CD4-positive, alpha-beta T cell (primary cell): ENCODE measurements at regions of chr17 and their contacts with region 1.

Region 1: DNA sequence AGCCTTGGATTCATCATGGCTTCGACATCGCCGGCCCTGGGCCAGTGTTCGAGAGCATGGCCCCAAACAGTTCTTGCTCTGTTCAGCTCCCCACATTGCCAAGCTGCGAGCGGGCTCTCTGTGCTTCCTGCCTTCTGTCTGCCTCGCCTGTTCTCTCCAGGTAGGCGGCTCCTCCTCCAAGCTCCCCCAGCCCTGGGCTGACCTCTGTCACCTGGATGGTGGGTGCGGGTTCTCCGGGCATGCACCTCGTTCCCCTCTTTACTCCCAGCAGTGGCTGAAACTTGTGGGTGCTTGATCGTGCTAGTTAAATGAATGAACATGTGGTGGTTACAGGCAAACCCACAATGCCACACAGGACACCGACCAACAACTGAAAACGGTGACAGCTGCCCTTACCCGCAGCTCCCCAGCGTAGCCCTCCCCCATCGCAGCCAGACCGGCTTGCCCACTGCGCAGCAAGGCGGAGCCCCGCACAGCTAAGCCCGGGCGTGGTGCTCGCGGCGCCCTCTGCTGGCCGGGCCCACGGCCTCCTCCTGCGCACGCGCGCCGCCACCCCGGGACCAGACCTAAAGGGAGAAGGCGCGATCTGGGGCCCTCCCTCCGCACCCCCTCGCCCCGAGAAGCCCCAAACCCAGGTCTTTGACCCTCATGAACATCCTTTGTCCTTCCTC is 23.0 kb upstream of the EIF1 start:
- DNase-seq: peak; percentile 75 to 95 (median 88)
- ATAC-seq: peak; percentile 80
- H3K4me3 ChIP-seq: peak overlapping the region; percentile 58
- H3K4me3 Mint-ChIP-seq: peak overlapping the region; percentile 87
- H3K27ac ChIP-seq: peak overlapping the region; percentile 98 to 99
- H3K27ac Mint-ChIP-seq: peak overlapping the region; percentile 90
- H3K4me1 ChIP-seq: peaks cover 42% of the 10 kb centered on the region
- H3K4me1 Mint-ChIP-seq: peaks cover 41% of the 10 kb centered on the region
- H3K27me3 ChIP-seq: no peaks in the 10 kb centered on the region
- H3K27me3 Mint-ChIP-seq: no peaks in the 10 kb centered on the region
- CTCF ChIP-seq: peak; percentile 99

Region 2: GRCh38 chr17:40542558-40543411 is 1122.9 kb before region 1 on chr17:
- CTCF ChIA-PET with region 1: interaction called, 3 read pairs
- POLR2A ChIA-PET with region 1: no interaction called
- intact Hi-C with region 1: loop called in 1 of 2 experiments (anchors 10 kb)
- DNase-seq: peak in 5 of 14 experiments; percentile 32 to 80 (median 45)
- ATAC-seq: no peak
- H3K4me3 ChIP-seq: no peak overlapping the region
- H3K4me3 Mint-ChIP-seq: peak overlapping the region; percentile 72
- H3K27ac ChIP-seq: peak overlapping the region in 1 of 2 donors; percentile 79
- H3K27ac Mint-ChIP-seq: peak overlapping the region; percentile 94
- H3K4me1 ChIP-seq: peaks cover 94% of the 10 kb centered on the region
- H3K4me1 Mint-ChIP-seq: peaks cover 83% of the 10 kb centered on the region
- H3K27me3 ChIP-seq: no peaks in the 10 kb centered on the region
- H3K27me3 Mint-ChIP-seq: no peaks in the 10 kb centered on the region
- CTCF ChIP-seq: no peak

Region 3: GRCh38 chr17:40818733-40819527 is 846.8 kb before region 1 on chr17:
- CTCF ChIA-PET with region 1: interaction called, 7 read pairs
- POLR2A ChIA-PET with region 1: interaction called, 22 read pairs
- intact Hi-C with region 1: no loop called
- DNase-seq: peak; percentile 68 to 96 (median 80)
- ATAC-seq: peak; percentile 83
- H3K4me3 ChIP-seq: peak overlapping the region; percentile 75
- H3K4me3 Mint-ChIP-seq: peak overlapping the region; percentile 96
- H3K27ac ChIP-seq: peak overlapping the region; percentile 62 to 74
- H3K27ac Mint-ChIP-seq: peak overlapping the region; percentile 89
- H3K4me1 ChIP-seq: peaks cover 5% of the 10 kb centered on the region
- H3K4me1 Mint-ChIP-seq: peaks cover 33% of the 10 kb centered on the region
- H3K27me3 ChIP-seq: peaks cover 0 to 1% of the 10 kb centered on the region in 2 experiments
- H3K27me3 Mint-ChIP-seq: peaks cover 15% of the 10 kb centered on the region
- CTCF ChIP-seq: no peak

Region 4: GRCh38 chr17:41121742-41122141 is 544.0 kb before region 1 on chr17:
- CTCF ChIA-PET with region 1: no interaction called
- POLR2A ChIA-PET with region 1: no interaction called
- intact Hi-C with region 1: loop called in 1 of 2 experiments (anchors 5 kb)
- DNase-seq: no peak
- ATAC-seq: no peak
- H3K4me3 ChIP-seq: no peak overlapping the region
- H3K4me3 Mint-ChIP-seq: no peak overlapping the region
- H3K27ac ChIP-seq: no peak overlapping the region
- H3K27ac Mint-ChIP-seq: no peak overlapping the region
- H3K4me1 ChIP-seq: peaks cover 25% of the 10 kb centered on the region
- H3K4me1 Mint-ChIP-seq: peaks cover 71% of the 10 kb centered on the region
- H3K27me3 ChIP-seq: no peaks in the 10 kb centered on the region
- H3K27me3 Mint-ChIP-seq: no peaks in the 10 kb centered on the region
- CTCF ChIP-seq: no peak

Region 5: DNA sequence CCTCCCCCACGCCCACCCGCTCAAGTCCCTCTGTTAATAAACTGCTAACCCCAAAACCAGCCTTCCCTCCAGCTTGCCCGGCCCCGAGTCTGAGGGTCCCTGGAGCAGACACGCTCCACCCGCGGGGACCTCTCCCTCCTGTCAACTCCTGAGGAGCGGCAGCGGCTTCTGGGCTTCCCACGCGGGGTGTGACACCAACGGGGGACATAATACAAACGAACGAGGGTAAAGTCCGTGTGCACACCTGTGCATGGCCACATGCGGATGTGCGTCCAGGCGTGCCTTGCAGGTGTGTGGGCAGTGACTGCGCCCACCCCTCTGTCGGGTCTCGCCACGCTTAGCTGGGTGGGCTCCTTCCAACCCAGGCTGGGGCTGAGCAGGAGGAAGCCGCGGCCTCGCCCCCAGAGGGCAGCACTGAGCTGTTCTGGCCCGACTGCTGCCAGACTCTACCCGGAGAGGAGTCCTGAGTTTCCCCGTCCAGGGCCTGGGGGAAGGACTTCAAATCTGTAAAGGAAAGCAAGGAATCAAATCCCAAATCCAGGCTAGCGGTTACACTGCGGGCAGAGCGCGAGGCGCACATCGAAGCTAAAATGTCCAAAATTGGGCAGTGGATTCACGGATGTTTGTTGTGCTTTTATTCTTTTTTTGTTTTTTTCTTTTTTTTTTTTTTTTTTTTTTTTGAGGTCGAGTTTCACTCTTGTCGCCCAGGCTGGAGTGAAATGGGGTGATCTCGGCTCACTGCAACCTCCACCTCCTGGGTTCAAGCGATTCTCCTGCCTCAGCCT is 17.1 kb before region 1 on chr17:
- CTCF ChIA-PET with region 1: interaction called, 110 read pairs
- POLR2A ChIA-PET with region 1: interaction called, 35 read pairs
- intact Hi-C with region 1: loop called (anchors 1 kb)
- DNase-seq: peak; percentile 70 to 92 (median 82)
- ATAC-seq: peak; percentile 88
- H3K4me3 ChIP-seq: peak overlapping the region; percentile 67
- H3K4me3 Mint-ChIP-seq: peak overlapping the region; percentile 86
- H3K27ac ChIP-seq: no peak overlapping the region
- H3K27ac Mint-ChIP-seq: peak overlapping the region; percentile 50
- H3K4me1 ChIP-seq: peaks cover 15% of the 10 kb centered on the region
- H3K4me1 Mint-ChIP-seq: peaks cover 12% of the 10 kb centered on the region
- H3K27me3 ChIP-seq: no peaks in the 10 kb centered on the region
- H3K27me3 Mint-ChIP-seq: no peaks in the 10 kb centered on the region
- CTCF ChIP-seq: peak; percentile 81

Region 6: DNA sequence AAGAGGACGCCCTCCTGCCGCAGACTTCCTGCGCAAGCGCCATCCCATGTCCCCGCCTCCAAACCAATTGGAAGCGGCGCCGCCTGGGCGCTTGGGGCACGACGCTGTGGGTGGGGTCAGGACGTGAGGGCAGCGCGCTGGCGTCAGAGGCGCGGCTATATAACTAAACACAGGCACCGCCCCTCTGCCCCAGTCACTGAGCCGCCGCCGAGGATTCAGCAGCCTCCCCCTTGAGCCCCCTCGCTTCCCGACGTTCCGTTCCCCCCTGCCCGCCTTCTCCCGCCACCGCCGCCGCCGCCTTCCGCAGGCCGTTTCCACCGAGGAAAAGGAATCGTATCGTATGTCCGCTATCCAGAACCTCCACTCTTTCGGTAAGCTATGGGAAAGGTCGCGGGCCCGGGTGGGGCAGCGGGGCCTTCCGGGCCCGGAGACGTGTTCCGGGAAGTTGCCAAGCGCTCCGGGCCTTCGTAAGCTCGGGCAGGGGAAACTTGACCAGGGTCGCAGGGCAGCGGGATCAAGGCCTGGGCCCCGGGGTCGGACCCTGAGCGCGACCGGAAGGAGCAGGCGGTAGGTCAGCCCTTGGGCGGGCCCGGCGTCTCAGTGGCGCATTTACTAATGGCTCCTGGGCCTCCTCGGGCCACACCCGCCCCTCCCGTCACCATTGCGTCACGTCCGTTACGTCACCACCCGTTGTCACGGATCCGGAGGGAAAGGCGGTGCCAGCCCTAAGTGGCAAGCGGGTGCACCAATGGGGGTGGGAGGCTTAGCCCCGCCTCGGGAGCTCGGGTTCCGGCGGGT is 23.2 kb after region 1 on chr17 and contains the start of gene EIF1:
- CTCF ChIA-PET with region 1: interaction called, 61 read pairs
- POLR2A ChIA-PET with region 1: interaction called, 181 read pairs
- intact Hi-C with region 1: loop called in 1 of 2 experiments (anchors 2 kb)
- DNase-seq: peak; percentile 99 to 100 (median 100)
- ATAC-seq: peak; percentile 74
- H3K4me3 ChIP-seq: peak within 1 kb of the TSS; percentile 81
- H3K4me3 Mint-ChIP-seq: peak within 1 kb of the TSS; percentile 99
- H3K27ac ChIP-seq: peak within 1 kb of the TSS; percentile 99 to 100
- H3K27ac Mint-ChIP-seq: peak within 1 kb of the TSS; percentile 100
- H3K4me1 ChIP-seq: peaks cover 36% of the 10 kb centered on the region
- H3K4me1 Mint-ChIP-seq: peaks cover 50% of the 10 kb centered on the region
- H3K27me3 ChIP-seq: no peaks in the 10 kb centered on the region
- H3K27me3 Mint-ChIP-seq: peaks cover 10% of the 10 kb centered on the region
- CTCF ChIP-seq: no peak
- total RNA-seq, gene EIF1: 3,351 to 3,391 TPM